Activated CD8-positive, alpha-beta T cell treated with anti-CD3 and anti-CD28 coated beads for 36 hours (primary cell): ENCODE measurements at regions of chr16 and their contacts with region 1.

Region 1: GRCh38 chr16:9258423-9259051 is 167.1 kb downstream of the HAPSTR1 start:
- DNase-seq: peak; percentile 46
- ATAC-seq: no peak
- H3K4me3 Mint-ChIP-seq: no peak overlapping the region
- H3K27ac Mint-ChIP-seq: no peak overlapping the region
- H3K4me1 Mint-ChIP-seq: no peaks in the 10 kb centered on the region
- H3K27me3 Mint-ChIP-seq: peaks cover 14% of the 10 kb centered on the region
- CTCF ChIP-seq: peak; percentile 74

Region 2: GRCh38 chr16:9128346-9129342 is 129.9 kb before region 1 on chr16:
- CTCF ChIA-PET with region 1: no interaction called
- POLR2A ChIA-PET with region 1: no interaction called
- intact Hi-C with region 1: no loop called
- DNase-seq: no peak
- ATAC-seq: no peak
- H3K4me3 Mint-ChIP-seq: no peak overlapping the region
- H3K27ac Mint-ChIP-seq: peak overlapping the region; percentile 88
- H3K4me1 Mint-ChIP-seq: peaks cover 63% of the 10 kb centered on the region
- H3K27me3 Mint-ChIP-seq: no peaks in the 10 kb centered on the region
- CTCF ChIP-seq: no peak

Region 3: GRCh38 chr16:9176547-9177418 is 81.8 kb before region 1 on chr16:
- CTCF ChIA-PET with region 1: no interaction called
- POLR2A ChIA-PET with region 1: no interaction called
- intact Hi-C with region 1: no loop called
- DNase-seq: no peak
- ATAC-seq: no peak
- H3K4me3 Mint-ChIP-seq: no peak overlapping the region
- H3K27ac Mint-ChIP-seq: no peak overlapping the region
- H3K4me1 Mint-ChIP-seq: no peaks in the 10 kb centered on the region
- H3K27me3 Mint-ChIP-seq: peaks cover 9% of the 10 kb centered on the region
- CTCF ChIP-seq: no peak

Region 4: GRCh38 chr16:9270424-9270823 is 11.9 kb after region 1 on chr16:
- CTCF ChIA-PET with region 1: interaction called, 35 read pairs
- POLR2A ChIA-PET with region 1: no interaction called
- intact Hi-C with region 1: no loop called
- DNase-seq: no peak
- ATAC-seq: no peak
- H3K4me3 Mint-ChIP-seq: no peak overlapping the region
- H3K27ac Mint-ChIP-seq: no peak overlapping the region
- H3K4me1 Mint-ChIP-seq: no peaks in the 10 kb centered on the region
- H3K27me3 Mint-ChIP-seq: peaks cover 9% of the 10 kb centered on the region
- CTCF ChIP-seq: no peak

Region 5: DNA sequence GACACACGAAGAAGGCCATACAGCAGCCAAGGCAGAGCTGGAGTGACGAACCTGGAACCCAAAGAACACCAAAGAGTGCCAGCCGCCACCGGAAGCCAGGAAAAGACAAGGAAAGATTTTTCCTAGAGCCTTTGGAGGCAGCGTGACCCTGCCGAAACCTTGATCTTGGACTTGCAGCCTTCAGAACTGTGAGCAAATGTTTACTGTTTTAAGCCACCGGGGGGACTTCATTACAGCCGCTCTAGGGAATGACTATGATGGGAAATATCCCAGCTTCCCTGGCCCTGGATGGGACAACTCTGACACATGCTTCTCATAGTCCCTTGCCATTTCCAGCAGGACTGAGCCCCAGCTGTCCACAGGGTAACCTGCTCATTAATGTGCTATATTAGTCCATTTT is 103.5 kb after region 1 on chr16:
- CTCF ChIA-PET with region 1: no interaction called
- POLR2A ChIA-PET with region 1: no interaction called
- intact Hi-C with region 1: no loop called
- DNase-seq: no peak
- ATAC-seq: no peak
- H3K4me3 Mint-ChIP-seq: no peak overlapping the region
- H3K27ac Mint-ChIP-seq: no peak overlapping the region
- H3K4me1 Mint-ChIP-seq: no peaks in the 10 kb centered on the region
- H3K27me3 Mint-ChIP-seq: no peaks in the 10 kb centered on the region
- CTCF ChIP-seq: no peak

Region 6: DNA sequence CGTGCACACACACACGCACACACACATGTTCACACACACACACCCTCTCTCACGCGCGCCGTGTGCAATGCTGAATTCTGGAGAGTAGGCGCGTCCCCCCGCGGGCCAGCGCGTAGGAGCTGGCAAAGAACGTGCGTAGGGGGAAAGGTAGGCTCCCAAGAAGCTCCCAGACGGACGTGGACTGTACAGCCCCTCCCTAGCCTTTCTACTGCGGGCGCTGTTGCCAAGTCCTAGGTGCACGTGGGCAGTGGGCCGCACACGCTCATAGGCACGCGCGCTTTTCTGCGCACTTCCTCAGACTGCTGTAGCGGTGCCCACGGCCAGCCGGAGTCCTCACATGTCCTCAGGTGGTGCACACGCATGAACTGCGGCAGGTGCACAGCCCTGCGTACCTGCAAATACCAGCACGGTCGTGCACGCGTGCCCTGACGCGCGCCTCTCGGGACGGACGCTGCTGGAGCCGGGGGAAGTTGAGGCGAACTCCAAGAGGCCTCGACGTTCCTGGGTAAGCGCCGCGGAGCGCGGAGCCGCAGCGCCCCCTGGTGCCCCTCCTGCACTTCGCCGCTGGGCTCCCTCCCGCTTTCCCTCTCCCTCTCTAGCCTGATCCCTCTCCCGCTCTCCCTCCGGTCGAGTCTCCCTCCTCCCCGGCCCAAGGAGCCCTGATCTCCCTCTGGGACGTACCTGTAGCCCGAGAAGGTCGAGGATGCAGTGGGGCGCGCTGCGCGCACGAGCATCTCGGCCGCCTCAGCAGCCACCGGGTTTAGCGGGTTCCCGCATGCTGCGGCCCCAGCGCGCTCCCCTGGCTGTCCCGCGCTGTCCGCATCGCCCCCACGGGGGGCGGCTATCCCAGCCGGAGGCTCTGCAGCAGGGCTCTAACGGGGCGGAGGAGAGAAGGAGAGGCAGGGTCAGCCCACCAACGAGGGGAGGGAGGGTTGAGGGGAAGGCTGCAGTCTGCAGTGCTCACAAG is 922.9 kb after region 1 on chr16:
- CTCF ChIA-PET with region 1: interaction called, 14 read pairs
- POLR2A ChIA-PET with region 1: no interaction called
- intact Hi-C with region 1: no loop called
- DNase-seq: peak; percentile 49
- ATAC-seq: peak; percentile 67
- H3K4me3 Mint-ChIP-seq: no peak overlapping the region
- H3K27ac Mint-ChIP-seq: no peak overlapping the region
- H3K4me1 Mint-ChIP-seq: peaks cover 9% of the 10 kb centered on the region
- H3K27me3 Mint-ChIP-seq: peaks cover 46% of the 10 kb centered on the region
- CTCF ChIP-seq: peak; percentile 91